ENCODE measurements at regions of chr2 and their contacts with region 1.

Region 1: DNA sequence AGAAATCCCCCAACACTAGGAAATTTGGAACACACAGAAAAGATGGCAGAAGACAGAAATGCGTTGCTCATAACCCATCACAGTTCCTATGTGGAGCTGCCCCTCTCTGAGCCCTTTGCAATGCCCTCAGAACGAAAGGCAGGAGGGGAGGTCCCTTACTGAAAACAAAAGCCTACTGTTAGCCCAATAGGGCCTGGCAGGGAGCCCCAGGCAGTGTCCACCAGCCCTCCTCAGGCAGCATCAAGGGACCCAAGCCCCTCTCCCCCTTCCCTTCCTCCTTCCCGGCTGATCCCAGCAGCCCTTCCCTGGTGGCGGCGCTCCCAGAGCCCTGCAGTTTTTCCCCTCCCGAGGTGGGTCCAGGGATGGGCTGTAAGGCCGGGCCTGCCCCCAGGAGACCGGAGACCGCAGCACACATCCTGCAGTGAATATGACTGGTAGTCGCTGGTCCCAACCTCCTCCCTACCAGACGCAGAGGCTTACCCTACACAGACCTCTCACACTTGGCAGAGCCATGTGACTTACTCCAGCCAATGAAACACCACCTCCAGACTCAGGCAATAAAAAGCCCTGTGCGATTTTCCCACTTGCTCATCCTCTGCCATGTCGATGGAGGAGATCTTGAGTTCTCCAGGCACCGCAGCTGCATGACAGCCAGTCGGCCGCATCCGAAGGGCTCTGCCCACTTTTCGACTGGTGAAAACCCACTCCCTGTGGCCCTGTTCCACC is 19.4 kb upstream of the DUSP2 start:
- DNase-seq: peak; percentile 86
- ATAC-seq: peak; percentile 85
- H3K4me3 Mint-ChIP-seq: peak overlapping the region; percentile 60
- H3K27ac Mint-ChIP-seq: peak overlapping the region; percentile 99
- H3K4me1 Mint-ChIP-seq: peaks cover 44% of the 10 kb centered on the region
- H3K27me3 Mint-ChIP-seq: no peaks in the 10 kb centered on the region

Region 2: DNA sequence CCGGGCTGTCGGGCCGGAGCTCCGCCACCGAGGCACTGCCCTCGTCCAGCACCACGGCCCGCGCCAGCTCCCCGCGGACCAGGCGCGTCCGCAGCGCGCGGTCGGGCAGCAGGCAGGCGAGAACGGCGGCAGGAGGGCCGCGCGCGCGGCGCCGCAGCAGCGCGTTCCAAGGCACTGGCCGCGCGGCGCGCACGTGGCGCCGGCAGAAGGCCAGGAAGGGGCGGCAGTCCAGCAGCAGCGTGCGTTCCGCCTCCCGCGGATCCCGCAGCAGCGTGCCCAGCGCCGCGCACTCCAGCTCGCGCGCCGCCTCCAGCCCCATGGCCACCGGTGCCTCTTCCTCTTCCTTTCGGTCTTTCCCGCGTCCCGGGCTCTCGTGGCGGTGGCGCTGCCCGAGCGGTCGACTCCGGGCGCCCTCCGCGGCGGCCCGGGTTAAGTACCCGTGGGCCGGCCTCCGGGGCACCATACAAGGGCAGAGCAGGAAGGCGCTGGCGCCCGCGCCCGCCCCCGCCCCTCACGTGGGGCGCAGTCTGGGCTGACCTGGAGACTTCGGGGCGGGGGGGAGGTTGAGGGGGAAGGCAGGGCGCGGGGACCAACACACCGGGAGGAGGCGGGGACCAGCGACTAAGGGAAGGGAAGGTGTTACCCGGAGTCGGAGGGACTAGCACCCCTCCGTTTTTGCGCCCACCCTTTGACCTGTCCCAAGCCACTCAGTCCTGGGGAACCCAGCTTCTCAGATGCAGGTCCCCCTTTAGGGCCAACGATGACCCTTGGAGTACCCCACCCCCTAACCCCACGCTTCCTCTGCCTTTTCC is 19.4 kb before region 1 on chr2 and contains the start of gene DUSP2:
- CTCF ChIA-PET with region 1: interaction called, 674 read pairs
- POLR2A ChIA-PET with region 1: interaction called, 193 read pairs
- DNase-seq: peak; percentile 88
- ATAC-seq: peak; percentile 68
- H3K4me3 Mint-ChIP-seq: peak within 1 kb of the TSS; percentile 88
- H3K27ac Mint-ChIP-seq: peak within 1 kb of the TSS; percentile 97
- H3K4me1 Mint-ChIP-seq: peaks cover 65% of the 10 kb centered on the region
- H3K27me3 Mint-ChIP-seq: no peaks in the 10 kb centered on the region
- total RNA-seq, gene DUSP2: 20.3 to 21.2 TPM

Region 3: DNA sequence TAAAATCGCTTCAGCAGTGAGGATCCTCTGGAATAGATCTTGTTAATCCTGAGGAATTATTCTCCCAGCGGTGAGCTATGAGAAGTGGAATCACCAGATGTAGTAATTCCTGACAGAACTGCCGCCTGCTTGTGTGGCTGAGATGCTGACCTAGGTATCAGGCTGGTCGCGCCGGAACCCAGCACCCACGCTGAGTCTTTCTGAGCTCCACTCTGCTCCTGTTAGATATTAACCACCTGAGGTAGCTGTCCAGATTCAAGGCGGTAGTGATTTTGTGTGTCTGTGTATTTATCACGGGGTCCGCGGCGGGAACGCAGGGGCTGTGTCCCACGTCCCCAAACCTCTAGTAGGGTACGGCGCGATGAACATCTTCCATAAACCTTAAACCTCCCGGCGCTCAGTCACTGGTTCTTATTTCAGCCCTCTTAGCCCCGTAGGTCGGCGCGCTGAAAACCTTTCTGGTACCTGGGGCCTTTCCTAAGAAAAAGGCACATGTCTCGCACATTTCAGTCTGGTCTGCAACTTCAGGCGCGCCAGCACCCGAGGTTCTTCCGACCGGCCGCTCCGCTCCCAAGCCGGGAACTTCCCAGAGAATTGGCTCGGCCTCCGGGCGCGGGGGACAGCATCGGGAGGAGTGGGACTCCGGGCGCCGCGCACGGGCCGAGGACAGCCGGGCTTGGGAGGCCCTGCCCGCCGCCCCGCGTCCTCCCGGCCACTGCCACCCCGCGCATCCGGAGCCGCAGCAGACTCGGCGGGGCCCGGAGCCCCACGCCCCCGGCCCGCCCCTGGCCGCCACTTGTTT is 650.9 kb after region 1 on chr2:
- CTCF ChIA-PET with region 1: no interaction called
- POLR2A ChIA-PET with region 1: no interaction called
- DNase-seq: no peak
- ATAC-seq: peak; percentile 1
- H3K4me3 Mint-ChIP-seq: peak overlapping the region; percentile 89
- H3K27ac Mint-ChIP-seq: peak overlapping the region; percentile 66
- H3K4me1 Mint-ChIP-seq: peaks cover 46% of the 10 kb centered on the region
- H3K27me3 Mint-ChIP-seq: no peaks in the 10 kb centered on the region

Measured in activated CD8-positive, alpha-beta T cell treated with anti-CD3 and anti-CD28 coated beads, Interleukin-2, amount 10 ng/mL, durations not matched to agents 7 days and 5 days (primary cell).